ENCODE measurements at regions of chr5 and their contacts with region 1.

Region 1: GRCh38 chr5:95730730-95731570 is at the start of gene RHOBTB3:
- DNase-seq: peak; percentile 60
- H3K4me3 ChIP-seq: peak within 1 kb of the TSS; percentile 81
- CTCF ChIP-seq: peak; percentile 8

Region 2: GRCh38 chr5:95664204-95664786 is 66.7 kb before region 1 on chr5:
- CTCF ChIA-PET with region 1: interaction called, 49 read pairs
- POLR2A ChIA-PET with region 1: interaction called, 12 read pairs
- DNase-seq: no peak
- H3K4me3 ChIP-seq: no peak overlapping the region
- CTCF ChIP-seq: peak; percentile 59

Region 3: GRCh38 chr5:95669540-95669939 is 61.4 kb before region 1 on chr5:
- CTCF ChIA-PET with region 1: interaction called, 49 read pairs
- POLR2A ChIA-PET with region 1: interaction called, 12 read pairs
- DNase-seq: peak; percentile 98
- H3K4me3 ChIP-seq: no peak overlapping the region
- CTCF ChIP-seq: no peak

Region 4: GRCh38 chr5:95743232-95743631 is 12.3 kb after region 1 on chr5:
- CTCF ChIA-PET with region 1: interaction called, 11 read pairs
- POLR2A ChIA-PET with region 1: interaction called, 4 read pairs
- DNase-seq: no peak
- H3K4me3 ChIP-seq: no peak overlapping the region
- CTCF ChIP-seq: no peak

Region 5: DNA sequence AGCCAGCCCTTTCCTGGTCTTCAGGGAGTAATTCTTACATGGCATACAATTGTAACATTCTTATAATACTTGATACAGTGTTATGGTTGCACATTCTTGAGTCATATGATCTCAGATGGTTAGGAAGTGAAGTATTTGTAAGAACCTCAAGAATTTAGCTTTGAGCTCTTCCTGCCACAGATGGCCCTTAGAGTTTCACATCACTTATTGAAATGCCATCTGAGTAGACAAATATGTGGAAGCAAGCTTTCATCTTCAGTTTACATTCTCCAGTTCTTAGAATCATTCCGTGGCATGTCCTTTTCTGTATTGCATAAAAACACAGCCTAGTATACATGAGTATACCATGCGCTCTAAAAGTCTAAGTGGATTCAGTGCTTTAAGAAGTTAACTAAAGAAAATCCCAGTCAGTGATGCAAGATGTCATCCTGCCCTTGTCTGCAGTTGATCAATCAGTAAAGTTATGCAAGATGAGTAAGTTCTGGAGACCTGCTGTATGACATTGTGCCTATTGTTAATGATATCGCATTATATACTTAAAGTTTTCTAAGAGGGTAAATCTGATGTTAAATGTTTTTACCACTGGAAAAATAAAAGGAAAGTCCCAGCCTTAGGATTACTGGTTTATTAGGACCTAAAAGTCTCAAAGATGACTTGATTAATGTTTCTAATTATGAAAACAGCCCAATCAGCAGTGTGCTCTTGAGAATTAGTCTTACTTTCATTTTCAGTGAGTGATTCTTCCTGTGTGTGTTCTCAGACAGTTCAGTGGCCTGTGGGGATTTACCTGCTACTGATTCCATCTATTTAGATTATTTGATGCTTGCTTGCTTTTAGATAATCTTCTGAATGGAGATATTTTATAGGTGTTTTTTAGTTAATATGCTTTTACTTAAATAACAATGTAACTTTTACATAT is 29.6 kb after region 1 on chr5:
- CTCF ChIA-PET with region 1: interaction called, 4 read pairs
- POLR2A ChIA-PET with region 1: interaction called, 10 read pairs
- DNase-seq: peak; percentile 99
- H3K4me3 ChIP-seq: peak overlapping the region; percentile 30
- CTCF ChIP-seq: no peak

Measured in AG04449 (cell line).